Activated CD4-positive, alpha-beta T cell treated with anti-CD3 and anti-CD28 coated beads for 36 hours (primary cell): ENCODE measurements at regions of chr14 and their contacts with region 1.

Region 1: DNA sequence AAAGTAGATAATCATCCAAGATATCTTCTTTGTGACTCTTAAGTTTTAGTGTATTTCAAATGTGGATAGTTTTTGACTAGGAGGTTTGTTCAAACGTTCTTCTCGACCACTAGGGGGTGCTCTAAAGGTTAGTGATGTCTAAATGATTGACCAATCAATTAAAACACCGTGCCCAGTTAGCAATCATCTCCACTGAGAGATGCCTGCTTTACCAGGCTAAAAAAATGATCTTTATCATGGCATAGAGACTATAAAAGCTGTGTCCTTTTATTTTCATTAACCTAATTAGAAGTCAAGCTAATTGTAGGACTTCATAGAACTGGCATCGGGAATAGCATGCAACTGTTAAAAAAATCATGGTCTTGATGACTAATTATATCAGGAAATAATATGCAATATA is 153.9 kb downstream of the PRKCH start:
- DNase-seq: no peak
- ATAC-seq: no peak
- H3K4me3 Mint-ChIP-seq: no peak overlapping the region
- H3K27ac Mint-ChIP-seq: peak overlapping the region; percentile 84
- H3K4me1 Mint-ChIP-seq: peaks cover 91% of the 10 kb centered on the region
- H3K27me3 Mint-ChIP-seq: no peaks in the 10 kb centered on the region

Region 2: GRCh38 chr14:61247935-61248334 is 227.4 kb before region 1 on chr14:
- CTCF ChIA-PET with region 1: no interaction called
- POLR2A ChIA-PET with region 1: no interaction called
- intact Hi-C with region 1: no loop called
- DNase-seq: no peak
- ATAC-seq: peak; percentile 82
- H3K4me3 Mint-ChIP-seq: no peak overlapping the region
- H3K27ac Mint-ChIP-seq: no peak overlapping the region
- H3K4me1 Mint-ChIP-seq: peaks cover 5% of the 10 kb centered on the region
- H3K27me3 Mint-ChIP-seq: peaks cover 15% of the 10 kb centered on the region

Region 3: DNA sequence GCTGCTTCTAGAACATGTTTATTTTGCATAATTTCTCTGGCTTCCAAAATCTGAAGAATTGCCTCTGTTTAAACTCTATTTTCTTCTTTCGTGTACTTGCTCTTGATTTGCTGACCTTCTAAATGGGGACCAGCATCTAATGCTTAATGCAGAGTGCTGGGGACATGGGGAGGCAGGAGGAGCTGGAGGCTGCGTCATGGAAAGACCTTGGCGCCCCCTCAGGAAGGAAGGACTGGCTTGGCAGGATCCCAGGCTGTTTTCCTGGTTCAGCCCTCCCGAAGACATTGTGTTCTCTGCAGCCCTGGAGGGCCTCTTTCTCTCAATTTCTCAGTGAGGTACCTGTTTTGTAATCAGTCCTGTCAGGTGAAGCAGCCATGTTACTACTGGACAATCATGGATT is 148.5 kb before region 1 on chr14:
- CTCF ChIA-PET with region 1: interaction called, 3 read pairs
- POLR2A ChIA-PET with region 1: no interaction called
- intact Hi-C with region 1: loop called in 1 of 2 experiments (anchors 1 kb)
- DNase-seq: no peak
- ATAC-seq: no peak
- H3K4me3 Mint-ChIP-seq: peak overlapping the region; percentile 92
- H3K27ac Mint-ChIP-seq: peak overlapping the region; percentile 94
- H3K4me1 Mint-ChIP-seq: peaks cover 71% of the 10 kb centered on the region
- H3K27me3 Mint-ChIP-seq: no peaks in the 10 kb centered on the region

Region 4: GRCh38 chr14:61503167-61503801 is 28.0 kb after region 1 on chr14:
- CTCF ChIA-PET with region 1: interaction called, 62 read pairs
- POLR2A ChIA-PET with region 1: interaction called, 15 read pairs
- intact Hi-C with region 1: loop called (anchors 1 kb)
- DNase-seq: peak; percentile 90
- ATAC-seq: peak; percentile 80
- H3K4me3 Mint-ChIP-seq: peak overlapping the region; percentile 56
- H3K27ac Mint-ChIP-seq: peak overlapping the region; percentile 99
- H3K4me1 Mint-ChIP-seq: peaks cover 98% of the 10 kb centered on the region
- H3K27me3 Mint-ChIP-seq: no peaks in the 10 kb centered on the region

Region 5: GRCh38 chr14:61547186-61548086 is 72.1 kb after region 1 on chr14:
- CTCF ChIA-PET with region 1: interaction called, 10 read pairs
- POLR2A ChIA-PET with region 1: no interaction called
- intact Hi-C with region 1: no loop called
- DNase-seq: no peak
- ATAC-seq: no peak
- H3K4me3 Mint-ChIP-seq: no peak overlapping the region
- H3K27ac Mint-ChIP-seq: peak overlapping the region; percentile 69
- H3K4me1 Mint-ChIP-seq: peaks cover 42% of the 10 kb centered on the region
- H3K27me3 Mint-ChIP-seq: no peaks in the 10 kb centered on the region

Region 6: GRCh38 chr14:61662437-61663311 is 187.4 kb after region 1 on chr14:
- CTCF ChIA-PET with region 1: interaction called, 6 read pairs
- POLR2A ChIA-PET with region 1: interaction called, 4 read pairs
- intact Hi-C with region 1: loop called (anchors 1 kb)
- DNase-seq: peak; percentile 73
- ATAC-seq: peak; percentile 84
- H3K4me3 Mint-ChIP-seq: peak overlapping the region; percentile 46
- H3K27ac Mint-ChIP-seq: peak overlapping the region; percentile 91
- H3K4me1 Mint-ChIP-seq: peaks cover 67% of the 10 kb centered on the region
- H3K27me3 Mint-ChIP-seq: no peaks in the 10 kb centered on the region

Region 7: DNA sequence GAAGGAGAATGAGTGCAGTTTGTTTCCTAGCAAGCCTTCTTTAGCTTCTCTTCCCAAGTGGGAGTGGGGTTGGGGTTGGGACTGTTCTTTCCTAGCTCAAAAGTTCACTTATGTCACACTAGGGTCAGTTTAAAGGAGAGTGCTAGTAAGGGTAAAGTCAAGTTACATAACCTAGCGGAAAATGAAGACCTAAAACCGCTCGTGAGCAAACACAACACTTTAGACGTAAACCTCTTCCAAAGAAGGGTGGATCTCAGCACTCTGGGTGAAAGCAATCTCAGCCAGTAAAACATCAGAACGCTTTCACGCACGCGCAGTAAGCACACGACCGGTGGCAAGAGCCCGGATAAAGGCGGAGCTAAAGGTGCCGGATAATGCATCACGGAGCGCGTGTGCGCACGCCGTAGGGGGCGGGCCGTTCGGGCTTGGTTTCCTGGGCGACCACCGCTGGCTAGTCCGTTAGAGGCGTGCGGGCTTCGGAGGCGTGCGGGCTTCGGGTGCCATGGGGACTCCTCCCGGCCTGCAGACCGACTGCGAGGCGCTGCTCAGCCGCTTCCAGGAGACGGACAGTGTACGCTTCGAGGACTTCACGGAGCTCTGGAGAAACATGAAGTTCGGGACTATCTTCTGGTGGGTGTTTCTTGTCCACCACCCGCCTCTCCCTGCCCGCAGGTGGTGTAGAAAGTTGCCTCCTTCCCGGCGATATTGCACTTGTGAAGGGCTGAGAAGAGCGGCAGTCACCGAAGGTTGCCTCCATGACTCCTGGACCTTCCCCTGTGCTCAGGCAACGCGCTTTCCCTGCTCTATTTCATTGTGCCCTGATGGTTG is 286.9 kb after region 1 on chr14 and contains the start of gene SNAPC1:
- CTCF ChIA-PET with region 1: interaction called, 7 read pairs
- POLR2A ChIA-PET with region 1: interaction called, 4 read pairs
- intact Hi-C with region 1: loop called in 1 of 2 experiments (anchors 1 kb)
- DNase-seq: peak; percentile 98
- ATAC-seq: peak; percentile 98
- H3K4me3 Mint-ChIP-seq: peak within 1 kb of the TSS; percentile 95
- H3K27ac Mint-ChIP-seq: peak within 1 kb of the TSS; percentile 96
- H3K4me1 Mint-ChIP-seq: peaks cover 35% of the 10 kb centered on the region
- H3K27me3 Mint-ChIP-seq: no peaks in the 10 kb centered on the region
- total RNA-seq, gene SNAPC1: 10.5 to 11.2 TPM